ENCODE measurements at regions of chr11 and their contacts with region 1.

Region 1: DNA sequence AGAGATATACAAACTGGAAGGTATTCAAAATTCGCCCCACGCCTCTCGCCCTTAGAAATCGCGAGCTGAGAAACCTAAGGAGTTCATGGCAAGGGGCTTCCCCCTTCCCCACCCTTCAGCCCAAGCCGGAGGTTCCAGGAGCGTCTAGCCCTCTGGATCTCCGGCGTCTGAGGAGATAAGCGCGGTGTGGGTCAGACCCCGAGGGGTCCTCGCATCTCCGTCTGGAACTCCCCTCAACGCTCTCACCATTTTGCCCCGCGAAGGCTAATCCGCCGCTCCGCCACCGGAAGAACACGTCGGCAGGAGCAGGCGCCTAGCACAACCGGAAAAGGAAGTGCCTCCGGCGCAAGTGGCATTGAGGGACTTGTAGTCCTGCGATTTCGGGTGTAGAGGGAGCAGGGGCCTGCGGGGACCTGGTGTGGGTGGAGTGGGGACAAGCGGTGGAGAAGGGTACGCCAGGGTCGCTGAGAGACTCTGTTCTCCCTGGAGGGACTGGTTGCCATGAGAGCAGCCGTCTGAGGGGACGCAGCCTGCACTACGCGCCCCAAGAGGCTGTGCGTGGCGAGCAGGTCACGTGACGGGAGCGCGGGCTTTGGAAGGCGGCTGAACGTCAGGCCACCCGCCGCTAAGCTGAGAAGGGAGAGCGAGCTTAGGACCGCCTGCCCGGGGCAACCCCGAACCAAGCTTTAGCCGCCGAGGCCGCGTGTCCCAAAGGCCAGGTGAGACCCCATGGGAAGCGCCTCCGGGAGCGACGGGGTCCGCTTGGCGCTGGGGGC is at the starts of genes FEN1 and TMEM258:
- DNase-seq: peak; percentile 88
- ATAC-seq: peak; percentile 77
- H3K4me3 Mint-ChIP-seq: peak within 1 kb of the TSS; percentile 94
- H3K27ac Mint-ChIP-seq: peak within 1 kb of the TSS; percentile 100
- H3K4me1 Mint-ChIP-seq: peaks cover 21% of the 10 kb centered on the region
- H3K27me3 Mint-ChIP-seq: no peaks in the 10 kb centered on the region; the same call in 1 of the 2 replicates
- CTCF ChIP-seq: no peak
- total RNA-seq, gene FEN1: 72.3 to 96.3 TPM (median 73.2 TPM) in 3 replicates
- total RNA-seq, gene TMEM258: 175 to 192 TPM (median 190 TPM) in 3 replicates

Region 2: GRCh38 chr11:61602775-61603569 is 189.5 kb before region 1 on chr11:
- CTCF ChIA-PET with region 1: no interaction called
- POLR2A ChIA-PET with region 1: no interaction called
- DNase-seq: no peak
- ATAC-seq: no peak
- H3K4me3 Mint-ChIP-seq: no peak overlapping the region
- H3K27ac Mint-ChIP-seq: no peak overlapping the region
- H3K4me1 Mint-ChIP-seq: peaks cover 29% of the 10 kb centered on the region
- H3K27me3 Mint-ChIP-seq: no peaks in the 10 kb centered on the region; the same call in 1 of the 2 replicates
- CTCF ChIP-seq: no peak

Region 3: DNA sequence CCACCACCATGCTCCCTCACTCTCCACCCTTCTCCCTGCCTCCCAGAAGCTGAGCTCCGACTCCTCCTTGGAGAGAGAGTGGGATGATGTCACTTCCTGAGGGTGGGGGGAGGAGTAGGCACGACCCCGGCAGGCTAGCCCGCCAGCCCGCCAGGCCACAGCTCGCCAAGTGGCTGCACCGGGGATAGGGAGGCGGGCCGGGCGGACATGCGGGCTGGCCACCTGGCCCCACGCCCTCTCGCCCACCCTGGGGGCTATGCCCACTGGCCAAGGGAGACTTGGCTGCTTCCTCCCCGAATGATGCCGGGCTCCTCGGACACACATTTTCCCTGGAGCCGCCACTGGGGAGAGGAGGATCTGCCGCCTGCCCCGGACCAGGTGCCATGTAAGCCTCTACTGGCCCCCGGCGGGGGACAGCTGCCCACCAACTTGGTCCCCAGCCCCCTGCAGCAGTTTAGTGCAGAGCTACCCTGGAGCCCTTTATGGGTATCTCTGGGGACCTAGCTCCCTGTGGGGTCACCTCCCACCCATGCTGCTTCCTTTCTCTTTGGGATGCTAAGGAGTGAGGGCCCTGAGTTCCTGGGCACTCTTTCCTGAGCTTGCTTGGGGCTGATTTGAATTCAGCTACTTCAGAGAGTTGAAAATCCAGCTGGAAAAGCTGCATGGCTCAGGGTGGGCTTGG is 73.7 kb before region 1 on chr11:
- CTCF ChIA-PET with region 1: interaction called, 11 read pairs
- POLR2A ChIA-PET with region 1: no interaction called
- DNase-seq: peak; percentile 73
- ATAC-seq: peak; percentile 79
- H3K4me3 Mint-ChIP-seq: peak overlapping the region; percentile 61
- H3K27ac Mint-ChIP-seq: peak overlapping the region; percentile 32; the same call in 1 of the 2 replicates
- H3K4me1 Mint-ChIP-seq: peaks cover 36% of the 10 kb centered on the region
- H3K27me3 Mint-ChIP-seq: peaks cover 3% of the 10 kb centered on the region; the same call in 1 of the 2 replicates
- CTCF ChIP-seq: no peak

Region 4: GRCh38 chr11:61756452-61757212 is 35.9 kb before region 1 on chr11:
- CTCF ChIA-PET with region 1: interaction called, 175 read pairs
- POLR2A ChIA-PET with region 1: interaction called, 3 read pairs
- DNase-seq: no peak
- ATAC-seq: no peak
- H3K4me3 Mint-ChIP-seq: no peak overlapping the region
- H3K27ac Mint-ChIP-seq: no peak overlapping the region
- H3K4me1 Mint-ChIP-seq: peaks cover 22% of the 10 kb centered on the region
- H3K27me3 Mint-ChIP-seq: peaks cover 24% of the 10 kb centered on the region
- CTCF ChIP-seq: no peak

Region 5: DNA sequence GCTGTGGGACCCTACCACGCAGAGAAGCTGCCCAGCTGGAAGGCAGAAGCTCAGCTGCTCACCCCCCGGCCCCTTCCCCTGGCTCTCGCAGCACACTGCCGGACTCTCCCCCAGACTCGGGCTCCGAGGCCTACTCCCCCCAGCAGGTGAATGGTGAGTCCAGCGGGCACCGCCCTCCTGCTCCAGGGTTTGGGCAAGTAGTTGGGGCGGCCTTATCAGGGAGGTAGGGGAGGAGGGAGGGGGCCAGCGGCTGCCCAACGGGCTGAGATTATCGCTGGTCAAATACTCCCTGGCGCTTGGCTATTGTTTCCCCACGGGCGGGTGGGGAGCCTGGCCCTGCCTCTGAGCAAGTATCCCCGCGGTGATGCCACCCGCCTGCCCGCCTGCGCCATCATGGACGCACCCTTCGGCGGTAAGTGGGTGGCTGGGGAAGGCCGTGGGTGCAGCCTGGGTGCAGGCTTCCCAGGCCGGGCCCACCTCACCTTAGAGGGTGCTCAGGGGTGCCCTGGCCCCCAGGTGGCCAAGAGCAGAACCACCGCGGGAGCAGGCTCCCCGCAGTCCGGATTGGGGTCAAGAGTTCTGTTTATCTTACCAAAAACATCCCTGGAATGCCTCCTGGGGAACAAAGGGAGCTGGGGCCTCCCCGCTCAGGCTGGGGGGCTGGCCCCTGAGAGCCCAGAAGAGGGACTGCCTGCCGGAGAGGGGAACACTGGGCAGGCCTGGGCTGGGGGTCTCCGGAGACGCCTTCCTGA is 23.2 kb before region 1 on chr11:
- CTCF ChIA-PET with region 1: interaction called, 46 read pairs
- POLR2A ChIA-PET with region 1: interaction called, 3 read pairs
- DNase-seq: peak; percentile 44
- ATAC-seq: peak; percentile 29
- H3K4me3 Mint-ChIP-seq: no peak overlapping the region
- H3K27ac Mint-ChIP-seq: no peak overlapping the region
- H3K4me1 Mint-ChIP-seq: peaks cover 12% of the 10 kb centered on the region
- H3K27me3 Mint-ChIP-seq: no peaks in the 10 kb centered on the region
- CTCF ChIP-seq: 0 out of 2 replicates have a peak, but pooled peaks have one; percentile 16

Region 6: DNA sequence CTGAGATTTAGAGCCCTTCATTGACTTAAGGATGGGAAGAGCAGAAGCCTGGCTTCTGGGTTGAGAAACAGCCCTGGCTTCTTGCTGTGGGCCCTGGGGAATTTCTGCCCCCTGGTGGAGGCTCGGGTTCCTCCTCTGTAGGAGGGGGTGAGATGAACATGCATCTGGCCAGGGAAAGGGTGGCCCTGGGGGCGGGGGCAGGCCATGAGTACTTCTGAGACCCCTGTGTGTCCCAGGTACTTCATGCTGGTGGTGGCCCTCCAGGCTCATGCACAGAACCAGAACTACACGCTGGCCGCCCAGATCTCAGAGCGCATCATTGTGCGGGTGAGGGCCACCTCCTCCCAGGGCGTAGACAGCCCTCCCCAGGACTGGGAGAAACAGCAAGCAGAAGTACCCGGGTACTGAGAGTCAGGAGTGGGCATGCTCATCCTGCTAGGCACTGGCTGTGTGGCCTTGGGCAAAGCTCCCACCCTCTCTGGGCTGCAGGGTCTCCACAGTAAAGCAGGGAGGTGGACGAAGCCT is 15.9 kb before region 1 on chr11:
- CTCF ChIA-PET with region 1: interaction called, 46 read pairs
- POLR2A ChIA-PET with region 1: no interaction called
- DNase-seq: peak; percentile 84
- ATAC-seq: peak; percentile 67
- H3K4me3 Mint-ChIP-seq: no peak overlapping the region
- H3K27ac Mint-ChIP-seq: no peak overlapping the region
- H3K4me1 Mint-ChIP-seq: peaks cover 14% of the 10 kb centered on the region
- H3K27me3 Mint-ChIP-seq: peaks cover 7% of the 10 kb centered on the region; the same call in 1 of the 2 replicates
- CTCF ChIP-seq: peak; percentile 54

Region 7: DNA sequence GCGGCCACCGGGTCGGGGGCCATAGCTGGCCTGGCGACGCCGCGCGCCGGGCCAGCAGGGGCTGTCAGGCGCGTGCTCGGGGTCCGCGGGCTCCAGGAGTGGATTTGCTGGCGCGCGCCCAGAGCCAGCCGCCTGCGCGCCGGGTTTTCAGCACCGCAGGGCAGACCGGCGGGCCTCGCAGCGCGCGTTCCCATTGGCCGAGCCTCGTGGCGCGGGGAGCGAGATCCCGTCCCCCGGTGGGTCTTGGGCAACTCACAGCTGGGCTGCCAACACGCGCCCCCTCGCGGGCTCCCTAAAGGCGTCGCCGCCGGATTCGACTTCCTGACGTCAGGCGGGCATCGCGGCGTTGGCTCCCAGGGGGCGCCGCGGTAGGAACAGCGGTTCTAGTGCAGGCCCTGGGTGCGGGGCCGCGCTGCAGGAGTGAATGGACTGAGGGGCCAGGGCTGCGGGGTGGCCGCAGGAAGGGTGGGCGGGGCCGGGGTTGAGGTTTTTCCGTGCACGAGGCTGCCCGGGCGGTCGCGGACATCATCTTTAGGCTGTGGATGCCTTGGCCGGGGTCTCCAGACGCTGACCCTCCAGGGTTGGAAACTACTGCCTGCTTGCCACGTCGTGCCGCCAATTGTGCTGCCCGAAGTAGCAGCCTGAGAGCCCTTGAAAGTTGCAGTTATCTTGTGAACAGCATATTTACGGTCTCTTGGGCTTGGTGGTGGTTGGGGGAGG is 24.4 kb after region 1 on chr11 and contains the start of gene FADS1:
- CTCF ChIA-PET with region 1: interaction called, 64 read pairs
- POLR2A ChIA-PET with region 1: interaction called, 25 read pairs
- DNase-seq: peak; percentile 90
- ATAC-seq: peak; percentile 32
- H3K4me3 Mint-ChIP-seq: peak within 1 kb of the TSS; percentile 94
- H3K27ac Mint-ChIP-seq: peak within 1 kb of the TSS; percentile 99
- H3K4me1 Mint-ChIP-seq: peaks cover 23% of the 10 kb centered on the region
- H3K27me3 Mint-ChIP-seq: no peaks in the 10 kb centered on the region; the same call in 1 of the 2 replicates
- CTCF ChIP-seq: no peak
- total RNA-seq, gene FADS1: 105 to 108 TPM (median 105 TPM) in 3 replicates

Region 8: GRCh38 chr11:61827571-61828378 is 35.3 kb after region 1 on chr11 and contains the start of gene FADS2:
- CTCF ChIA-PET with region 1: interaction called, 28 read pairs
- POLR2A ChIA-PET with region 1: interaction called, 5 read pairs
- DNase-seq: peak; percentile 89
- ATAC-seq: peak; percentile 70
- H3K4me3 Mint-ChIP-seq: peak within 1 kb of the TSS; percentile 85
- H3K27ac Mint-ChIP-seq: peak within 1 kb of the TSS; percentile 97
- H3K4me1 Mint-ChIP-seq: peaks cover 48% of the 10 kb centered on the region
- H3K27me3 Mint-ChIP-seq: no peaks in the 10 kb centered on the region
- CTCF ChIP-seq: no peak
- total RNA-seq, gene FADS2: 416 to 423 TPM (median 422 TPM) in 3 replicates